SK-N-SH (cell line): ENCODE measurements at regions of chr2 and their contacts with region 1.

Region 1: GRCh38 chr2:74715078-74715791 is 61.2 kb downstream of the SEMA4F start:
- DNase-seq: peak; percentile 89
- H3K4me3 ChIP-seq: peak overlapping the region; percentile 63 to 64
- H3K27ac ChIP-seq: peak overlapping the region in 1 of 2 experiments; percentile 53; a peak in 1 of 4 replicates
- H3K4me1 ChIP-seq: peaks cover 0 to 4% of the 10 kb centered on the region in 2 experiments; a peak in 2 of 4 replicates
- H3K27me3 ChIP-seq: no peaks in the 10 kb centered on the region
- CTCF ChIP-seq: peak; percentile 93
- EP300 ChIP-seq: no peak
- RAD21 ChIP-seq: peak; percentile 81

Region 2: GRCh38 chr2:74690571-74690970 is 24.7 kb before region 1 on chr2:
- CTCF ChIA-PET with region 1: interaction called, 18 read pairs
- POLR2A ChIA-PET with region 1: no interaction called
- DNase-seq: peak; percentile 68
- H3K4me3 ChIP-seq: no peak overlapping the region
- H3K27ac ChIP-seq: no peak overlapping the region
- H3K4me1 ChIP-seq: no peaks in the 10 kb centered on the region; a peak in 1 of 4 replicates
- H3K27me3 ChIP-seq: no peaks in the 10 kb centered on the region
- CTCF ChIP-seq: peak; percentile 92
- EP300 ChIP-seq: no peak
- RAD21 ChIP-seq: peak; percentile 98

Region 3: DNA sequence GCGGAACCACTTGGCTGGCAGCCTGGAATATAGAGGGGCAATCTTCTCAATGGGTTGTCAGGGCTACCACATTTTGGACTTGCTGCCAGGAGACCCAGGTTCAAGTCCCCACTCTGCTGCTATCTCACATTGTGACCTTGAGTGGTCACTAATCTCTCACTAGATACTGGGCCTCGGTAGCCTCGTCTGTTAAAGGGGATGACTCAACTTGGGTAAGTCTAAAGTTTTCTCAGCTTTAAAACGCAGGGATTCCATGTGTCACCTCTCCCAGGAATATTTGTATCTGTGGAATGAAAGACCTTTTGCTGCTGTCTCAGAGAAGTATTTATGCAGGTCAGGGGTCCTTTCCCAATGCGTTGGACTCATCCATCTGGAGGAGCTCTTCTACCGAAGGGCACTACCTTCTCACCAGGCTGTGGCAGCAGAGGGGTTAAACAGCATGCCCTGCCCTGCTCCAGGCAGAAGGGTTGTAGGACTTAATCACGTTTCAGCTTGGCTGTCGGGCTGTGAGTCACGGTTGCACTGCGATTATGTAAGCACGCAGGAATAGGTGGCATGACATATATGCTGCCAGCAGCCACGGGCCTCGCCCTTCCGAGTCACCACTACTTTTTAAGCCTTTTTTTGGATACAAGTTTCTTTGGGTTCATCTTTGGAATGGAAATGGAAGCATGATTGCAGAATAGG is 25.3 kb after region 1 on chr2:
- CTCF ChIA-PET with region 1: interaction called, 28 read pairs
- POLR2A ChIA-PET with region 1: no interaction called
- DNase-seq: no peak
- H3K4me3 ChIP-seq: peak overlapping the region in 1 of 2 experiments; percentile 8; a peak in 1 of 4 replicates
- H3K27ac ChIP-seq: peak overlapping the region; percentile 53 to 62; a peak in 3 of 4 replicates
- H3K4me1 ChIP-seq: peaks cover 24 to 29% of the 10 kb centered on the region in 2 experiments
- H3K27me3 ChIP-seq: no peaks in the 10 kb centered on the region
- CTCF ChIP-seq: no peak
- EP300 ChIP-seq: peak in 1 of 2 experiments; percentile 67; a peak in 1 of 4 replicates
- RAD21 ChIP-seq: no peak

Region 4: DNA sequence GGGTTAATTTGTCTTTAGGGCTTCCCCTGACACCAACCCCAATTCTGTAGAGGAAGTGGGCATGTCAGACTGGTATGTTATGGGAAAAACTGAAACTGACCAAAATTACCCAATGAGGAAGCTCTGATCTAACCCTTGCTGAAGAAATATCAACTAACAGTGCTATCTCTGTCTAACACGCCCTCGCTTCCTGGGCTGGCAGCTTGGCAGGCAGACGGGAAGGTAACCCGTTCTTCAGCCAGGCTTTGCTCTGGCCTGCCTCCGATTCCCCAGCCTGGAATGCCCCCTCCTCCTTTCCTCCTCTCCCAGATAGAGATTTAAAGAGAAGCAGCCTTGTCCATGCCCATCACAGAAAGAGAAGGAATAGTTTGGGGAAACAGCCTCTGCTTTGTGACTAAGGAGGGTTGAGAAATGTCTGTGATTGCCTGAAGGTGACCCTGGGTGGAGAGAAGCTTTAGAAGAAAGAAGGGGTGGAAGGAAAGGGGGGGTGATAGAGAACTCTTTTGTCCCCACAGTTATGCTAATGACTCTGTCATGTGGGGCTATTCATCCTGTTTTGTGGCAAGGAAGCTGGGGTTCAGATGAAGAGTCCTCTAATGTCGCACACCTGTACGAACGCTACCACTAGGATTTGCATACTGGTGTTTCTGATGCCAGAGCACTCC is 134.1 kb after region 1 on chr2:
- CTCF ChIA-PET with region 1: interaction called, 18 read pairs
- POLR2A ChIA-PET with region 1: no interaction called
- DNase-seq: no peak
- H3K4me3 ChIP-seq: no peak overlapping the region
- H3K27ac ChIP-seq: no peak overlapping the region
- H3K4me1 ChIP-seq: peaks cover 36 to 50% of the 10 kb centered on the region in 2 experiments; a peak in 3 of 4 replicates
- H3K27me3 ChIP-seq: no peaks in the 10 kb centered on the region
- CTCF ChIP-seq: no peak
- EP300 ChIP-seq: no peak
- RAD21 ChIP-seq: no peak

Region 5: DNA sequence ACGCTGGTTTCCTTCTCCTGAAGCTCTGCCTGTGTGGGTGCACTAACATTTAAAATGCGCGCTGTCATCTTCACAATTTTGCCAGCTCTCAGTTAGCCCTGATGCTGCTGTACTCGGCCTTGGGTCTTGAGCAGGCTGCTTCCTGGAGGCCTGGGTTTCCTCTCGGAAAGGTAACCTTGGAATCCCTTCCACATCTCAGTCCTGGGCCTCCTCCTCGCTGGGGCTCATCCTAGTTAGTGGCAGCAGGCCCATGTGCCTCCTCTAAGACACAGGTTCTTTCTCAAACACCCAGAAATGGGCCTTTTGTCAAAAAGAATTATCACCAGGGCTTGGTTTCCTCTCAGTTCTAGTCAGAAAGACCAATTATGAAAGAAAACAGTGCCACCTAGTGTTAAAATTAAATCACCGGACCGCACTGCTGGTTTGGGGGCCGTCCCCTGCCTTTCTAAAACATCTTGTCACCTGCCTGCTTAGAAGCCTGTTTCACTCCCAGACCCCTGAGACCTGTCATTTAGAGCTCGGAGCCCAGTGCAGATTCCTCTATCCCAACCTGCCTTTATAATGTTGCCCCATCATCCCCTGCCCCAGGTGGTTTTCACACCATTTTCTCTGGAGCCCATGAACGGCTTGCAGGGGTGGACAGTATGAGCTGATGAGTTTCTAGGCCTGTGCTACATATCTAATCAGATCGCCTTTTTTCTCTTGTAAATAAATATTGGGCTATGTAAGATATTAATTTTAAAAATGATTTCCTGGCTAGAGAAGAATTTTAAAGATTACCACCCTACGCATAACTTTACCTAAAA is 161.0 kb after region 1 on chr2:
- CTCF ChIA-PET with region 1: interaction called, 93 read pairs
- POLR2A ChIA-PET with region 1: no interaction called
- DNase-seq: peak; percentile 81
- H3K4me3 ChIP-seq: no peak overlapping the region; a peak in 1 of 4 replicates
- H3K27ac ChIP-seq: peak overlapping the region in 1 of 2 experiments; percentile 39; a peak in 1 of 4 replicates
- H3K4me1 ChIP-seq: peaks cover 0 to 3% of the 10 kb centered on the region in 2 experiments; a peak in 1 of 4 replicates
- H3K27me3 ChIP-seq: no peaks in the 10 kb centered on the region
- CTCF ChIP-seq: peak; percentile 79
- EP300 ChIP-seq: no peak
- RAD21 ChIP-seq: peak; percentile 86

Region 6: DNA sequence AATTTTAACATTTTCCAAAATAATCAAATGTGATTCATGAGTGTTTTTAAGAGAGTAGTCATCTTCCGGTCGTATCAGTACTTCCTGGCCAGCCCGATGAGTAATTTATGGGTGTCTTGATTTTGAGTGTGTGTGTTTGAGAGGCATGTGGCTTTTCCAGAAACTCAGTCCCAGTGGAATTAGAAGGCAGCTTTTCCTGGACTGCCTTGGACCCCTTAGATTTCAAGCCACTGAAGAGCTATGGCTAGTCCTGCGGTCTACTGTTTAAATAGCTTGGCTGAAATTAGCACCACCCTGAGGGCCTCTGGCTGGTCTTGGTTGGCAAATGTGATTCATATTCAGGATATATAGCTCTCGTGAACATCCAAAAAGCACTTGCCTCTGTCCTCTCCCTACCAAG is 178.1 kb after region 1 on chr2:
- CTCF ChIA-PET with region 1: no interaction called
- POLR2A ChIA-PET with region 1: no interaction called
- DNase-seq: no peak
- H3K4me3 ChIP-seq: no peak overlapping the region
- H3K27ac ChIP-seq: peak overlapping the region in 1 of 2 experiments; percentile 72; a peak in 2 of 4 replicates
- H3K4me1 ChIP-seq: peaks cover 0 to 8% of the 10 kb centered on the region in 2 experiments; a peak in 1 of 4 replicates
- H3K27me3 ChIP-seq: no peaks in the 10 kb centered on the region
- CTCF ChIP-seq: no peak
- EP300 ChIP-seq: no peak
- RAD21 ChIP-seq: no peak